ENCODE measurements at regions of chr11 and their contacts with region 1.

Region 1: GRCh38 chr11:12185914-12186313 is 75.5 kb downstream of the MICAL2 start:
- DNase-seq: no peak
- H3K4me3 Mint-ChIP-seq: no peak overlapping the region
- H3K27ac Mint-ChIP-seq: no peak overlapping the region
- H3K4me1 Mint-ChIP-seq: peaks cover 37% of the 10 kb centered on the region
- H3K27me3 Mint-ChIP-seq: no peaks in the 10 kb centered on the region

Region 2: GRCh38 chr11:11502263-11502861 is 683.6 kb before region 1 on chr11:
- CTCF ChIA-PET with region 1: no interaction called
- POLR2A ChIA-PET with region 1: no interaction called
- intact Hi-C with region 1: no loop called
- DNase-seq: no peak
- H3K4me3 Mint-ChIP-seq: no peak overlapping the region
- H3K27ac Mint-ChIP-seq: no peak overlapping the region
- H3K4me1 Mint-ChIP-seq: no peaks in the 10 kb centered on the region
- H3K27me3 Mint-ChIP-seq: no peaks in the 10 kb centered on the region

Region 3: GRCh38 chr11:12094872-12095800 is 90.8 kb before region 1 on chr11:
- CTCF ChIA-PET with region 1: no interaction called
- POLR2A ChIA-PET with region 1: no interaction called
- intact Hi-C with region 1: no loop called
- DNase-seq: no peak
- H3K4me3 Mint-ChIP-seq: no peak overlapping the region
- H3K27ac Mint-ChIP-seq: no peak overlapping the region
- H3K4me1 Mint-ChIP-seq: peaks cover 14% of the 10 kb centered on the region
- H3K27me3 Mint-ChIP-seq: peaks cover 3% of the 10 kb centered on the region

Region 4: GRCh38 chr11:12110201-12110713 is 75.7 kb before region 1 on chr11 and contains the start of gene MICAL2:
- CTCF ChIA-PET with region 1: interaction called, 5 read pairs
- POLR2A ChIA-PET with region 1: interaction called, 3 read pairs
- intact Hi-C with region 1: loop called (anchors 1 kb)
- DNase-seq: peak; percentile 91
- H3K4me3 Mint-ChIP-seq: peak within 1 kb of the TSS; percentile 82
- H3K27ac Mint-ChIP-seq: peak within 1 kb of the TSS; percentile 91
- H3K4me1 Mint-ChIP-seq: peaks cover 40% of the 10 kb centered on the region
- H3K27me3 Mint-ChIP-seq: no peaks in the 10 kb centered on the region
- total RNA-seq, gene MICAL2: 213 to 220 TPM

Region 5: GRCh38 chr11:12159351-12160099 is 26.4 kb before region 1 on chr11:
- CTCF ChIA-PET with region 1: interaction called, 4 read pairs
- POLR2A ChIA-PET with region 1: interaction called, 5 read pairs
- intact Hi-C with region 1: loop called (anchors 1 kb)
- DNase-seq: peak; percentile 11
- H3K4me3 Mint-ChIP-seq: no peak overlapping the region
- H3K27ac Mint-ChIP-seq: peak overlapping the region; percentile 36
- H3K4me1 Mint-ChIP-seq: peaks cover 58% of the 10 kb centered on the region
- H3K27me3 Mint-ChIP-seq: no peaks in the 10 kb centered on the region

Region 6: GRCh38 chr11:12167098-12168000 is 18.6 kb before region 1 on chr11:
- CTCF ChIA-PET with region 1: interaction called, 4 read pairs
- POLR2A ChIA-PET with region 1: interaction called, 3 read pairs
- intact Hi-C with region 1: loop called (anchors 1 kb)
- DNase-seq: peak; percentile 71
- H3K4me3 Mint-ChIP-seq: no peak overlapping the region
- H3K27ac Mint-ChIP-seq: peak overlapping the region; percentile 75
- H3K4me1 Mint-ChIP-seq: peaks cover 36% of the 10 kb centered on the region
- H3K27me3 Mint-ChIP-seq: no peaks in the 10 kb centered on the region

Region 7: GRCh38 chr11:12174477-12175143 is 11.3 kb before region 1 on chr11:
- CTCF ChIA-PET with region 1: interaction called, 13 read pairs
- POLR2A ChIA-PET with region 1: interaction called, 30 read pairs
- intact Hi-C with region 1: loop called (anchors 1 kb)
- DNase-seq: no peak
- H3K4me3 Mint-ChIP-seq: peak overlapping the region; percentile 27
- H3K27ac Mint-ChIP-seq: peak overlapping the region; percentile 93
- H3K4me1 Mint-ChIP-seq: peaks cover 68% of the 10 kb centered on the region
- H3K27me3 Mint-ChIP-seq: no peaks in the 10 kb centered on the region

Region 8: DNA sequence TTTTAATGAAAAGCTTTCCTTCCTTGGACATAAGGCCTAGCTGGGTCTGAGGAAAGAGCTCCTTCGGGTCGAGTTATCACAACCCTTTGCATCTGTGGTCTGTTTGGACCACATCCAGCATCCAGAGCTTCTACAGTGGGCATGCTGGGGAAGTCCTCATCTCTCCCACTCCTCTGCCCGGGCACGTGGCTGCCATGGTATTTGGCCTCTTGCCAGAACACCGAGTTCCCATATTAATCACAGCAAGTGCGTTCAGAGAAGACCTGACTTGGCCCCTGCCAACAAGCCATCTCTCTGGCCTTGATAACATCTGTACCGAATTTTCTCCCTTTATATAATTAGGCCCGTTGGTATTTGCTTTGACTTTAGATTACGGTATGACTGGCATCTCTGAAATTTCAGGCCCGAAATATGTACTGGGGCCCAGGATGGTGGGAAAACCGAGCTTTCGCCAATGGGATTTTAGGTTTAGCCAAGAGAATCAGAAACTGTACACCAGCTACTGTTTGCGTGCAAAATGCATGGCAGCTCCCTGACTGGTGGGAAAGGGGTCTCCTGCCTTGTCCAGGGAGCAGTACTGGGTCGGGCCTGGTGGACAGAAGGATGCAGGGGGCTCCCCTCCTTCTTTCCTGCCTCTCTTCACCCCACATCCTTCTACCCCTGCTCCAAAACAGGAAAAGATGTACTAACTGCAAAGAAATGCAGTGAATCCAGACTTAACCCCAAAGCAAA is 14.5 kb after region 1 on chr11:
- CTCF ChIA-PET with region 1: interaction called, 14 read pairs
- POLR2A ChIA-PET with region 1: interaction called, 27 read pairs
- intact Hi-C with region 1: loop called (anchors 1 kb)
- DNase-seq: peak; percentile 72
- H3K4me3 Mint-ChIP-seq: peak overlapping the region; percentile 26
- H3K27ac Mint-ChIP-seq: peak overlapping the region; percentile 98
- H3K4me1 Mint-ChIP-seq: peaks cover 89% of the 10 kb centered on the region
- H3K27me3 Mint-ChIP-seq: no peaks in the 10 kb centered on the region

Region 9: DNA sequence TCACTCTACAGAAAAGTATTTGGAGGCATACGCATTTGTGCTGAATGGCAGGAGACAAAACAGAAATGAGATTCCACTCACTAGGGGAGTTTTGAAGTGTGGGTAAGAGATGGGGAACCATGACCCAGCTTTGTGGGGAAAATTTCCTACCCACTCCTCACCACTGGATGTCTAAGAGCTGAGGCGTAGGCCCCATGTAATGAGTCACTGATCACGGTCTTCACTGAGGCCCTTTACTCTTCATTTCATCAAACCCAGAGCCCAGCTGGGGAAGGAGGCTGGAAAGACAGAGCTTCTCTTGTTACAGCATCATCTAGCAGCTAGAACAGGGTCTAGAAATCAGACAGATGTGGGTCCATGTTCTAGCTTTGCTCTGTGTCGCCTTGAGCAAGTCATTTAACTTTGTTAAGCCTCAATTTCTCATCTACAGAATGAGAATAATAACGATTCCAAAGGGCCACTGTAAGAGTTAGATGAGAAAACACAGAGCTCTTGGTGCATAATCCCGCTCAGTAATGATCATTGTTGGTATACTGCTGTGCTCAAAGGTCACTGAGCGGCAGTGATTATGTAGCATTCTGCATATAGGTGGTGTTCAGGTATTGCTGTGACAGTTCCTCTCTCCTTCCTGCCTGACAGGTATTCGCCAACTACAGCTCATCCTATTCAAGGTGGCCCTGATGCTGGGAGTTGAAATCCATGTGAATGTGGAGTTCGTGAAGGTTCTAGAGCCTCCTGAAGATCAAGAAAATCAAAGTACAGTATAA is 21.7 kb after region 1 on chr11:
- CTCF ChIA-PET with region 1: interaction called, 10 read pairs
- POLR2A ChIA-PET with region 1: interaction called, 13 read pairs
- intact Hi-C with region 1: loop called (anchors 1 kb)
- DNase-seq: peak; percentile 84
- H3K4me3 Mint-ChIP-seq: peak overlapping the region; percentile 14
- H3K27ac Mint-ChIP-seq: peak overlapping the region; percentile 87
- H3K4me1 Mint-ChIP-seq: peaks cover 69% of the 10 kb centered on the region
- H3K27me3 Mint-ChIP-seq: no peaks in the 10 kb centered on the region

Measured in activated CD4-positive, alpha-beta memory T cell treated with anti-CD3 and anti-CD28 coated beads for 36 hours (primary cell).